MCF 10A (cell line): ENCODE measurements at regions of chr22 and their contacts with region 1.

Region 1: GRCh38 chr22:17057959-17058814 is 26.6 kb upstream of the IL17RA start:
- DNase-seq: peak; percentile 79
- H3K4me3 Mint-ChIP-seq: no peak overlapping the region
- H3K27ac Mint-ChIP-seq: peak overlapping the region; percentile 24
- H3K4me1 Mint-ChIP-seq: peaks cover 5% of the 10 kb centered on the region
- H3K27me3 Mint-ChIP-seq: no peaks in the 10 kb centered on the region
- CTCF ChIP-seq: peak; percentile 88

Region 2: DNA sequence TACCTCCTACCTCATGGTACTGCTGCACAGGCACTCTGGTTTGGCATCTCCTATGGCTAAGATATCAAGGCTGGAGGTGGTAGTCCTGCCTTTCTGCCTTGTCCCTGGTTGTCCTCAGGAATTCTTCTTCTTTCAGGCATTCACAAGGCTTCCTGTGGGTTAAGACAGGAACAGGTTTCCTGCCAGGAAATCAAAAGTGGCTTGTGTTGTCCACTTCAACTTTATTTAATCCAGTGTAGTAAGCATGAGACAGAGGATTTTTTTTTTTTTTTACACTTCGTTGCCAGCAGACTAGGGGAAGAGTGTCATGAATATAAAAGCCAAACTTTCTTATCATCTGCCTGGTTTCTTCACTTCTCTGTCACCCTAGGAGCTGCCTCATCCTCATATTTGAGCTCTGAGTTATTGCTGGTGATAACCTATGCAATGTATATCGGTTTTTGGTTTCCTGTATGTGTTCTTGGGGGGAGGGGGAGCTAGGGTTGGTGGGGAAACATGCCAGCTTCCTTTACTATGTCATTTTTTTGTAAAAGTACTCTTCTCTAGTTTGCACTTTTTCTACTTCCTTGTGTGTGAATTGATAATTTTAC is 283.2 kb before region 1 on chr22:
- CTCF ChIA-PET with region 1: interaction called, 5 read pairs
- POLR2A ChIA-PET with region 1: no interaction called
- intact Hi-C with region 1: loop called (anchors 10 kb)
- DNase-seq: no peak
- H3K4me3 Mint-ChIP-seq: no peak overlapping the region
- H3K27ac Mint-ChIP-seq: no peak overlapping the region
- H3K4me1 Mint-ChIP-seq: no peaks in the 10 kb centered on the region
- H3K27me3 Mint-ChIP-seq: no peaks in the 10 kb centered on the region
- CTCF ChIP-seq: no peak

Region 3: GRCh38 chr22:16932577-16932976 is 125.6 kb before region 1 on chr22:
- CTCF ChIA-PET with region 1: interaction called, 13 read pairs
- POLR2A ChIA-PET with region 1: no interaction called
- intact Hi-C with region 1: loop called (anchors 1 kb)
- DNase-seq: peak; percentile 37
- H3K4me3 Mint-ChIP-seq: no peak overlapping the region
- H3K27ac Mint-ChIP-seq: no peak overlapping the region
- H3K4me1 Mint-ChIP-seq: no peaks in the 10 kb centered on the region
- H3K27me3 Mint-ChIP-seq: peaks cover 63% of the 10 kb centered on the region
- CTCF ChIP-seq: peak; percentile 19

Region 4: GRCh38 chr22:17035246-17035645 is 22.9 kb before region 1 on chr22:
- CTCF ChIA-PET with region 1: interaction called, 16 read pairs
- POLR2A ChIA-PET with region 1: interaction called, 3 read pairs
- intact Hi-C with region 1: no loop called
- DNase-seq: peak; percentile 41
- H3K4me3 Mint-ChIP-seq: peak overlapping the region; percentile 94
- H3K27ac Mint-ChIP-seq: peak overlapping the region; percentile 78
- H3K4me1 Mint-ChIP-seq: peaks cover 25% of the 10 kb centered on the region
- H3K27me3 Mint-ChIP-seq: no peaks in the 10 kb centered on the region
- CTCF ChIP-seq: no peak

Region 5: GRCh38 chr22:17077255-17077654 is 19.1 kb after region 1 on chr22:
- CTCF ChIA-PET with region 1: interaction called, 36 read pairs
- POLR2A ChIA-PET with region 1: interaction called, 3 read pairs
- intact Hi-C with region 1: no loop called
- DNase-seq: no peak
- H3K4me3 Mint-ChIP-seq: no peak overlapping the region
- H3K27ac Mint-ChIP-seq: no peak overlapping the region
- H3K4me1 Mint-ChIP-seq: no peaks in the 10 kb centered on the region
- H3K27me3 Mint-ChIP-seq: no peaks in the 10 kb centered on the region
- CTCF ChIP-seq: no peak